Activated CD4-positive, alpha-beta memory T cell treated with anti-CD3 and anti-CD28 coated beads for 36 hours (primary cell): ENCODE measurements at regions of chr17 and their contacts with region 1.

Region 1: DNA sequence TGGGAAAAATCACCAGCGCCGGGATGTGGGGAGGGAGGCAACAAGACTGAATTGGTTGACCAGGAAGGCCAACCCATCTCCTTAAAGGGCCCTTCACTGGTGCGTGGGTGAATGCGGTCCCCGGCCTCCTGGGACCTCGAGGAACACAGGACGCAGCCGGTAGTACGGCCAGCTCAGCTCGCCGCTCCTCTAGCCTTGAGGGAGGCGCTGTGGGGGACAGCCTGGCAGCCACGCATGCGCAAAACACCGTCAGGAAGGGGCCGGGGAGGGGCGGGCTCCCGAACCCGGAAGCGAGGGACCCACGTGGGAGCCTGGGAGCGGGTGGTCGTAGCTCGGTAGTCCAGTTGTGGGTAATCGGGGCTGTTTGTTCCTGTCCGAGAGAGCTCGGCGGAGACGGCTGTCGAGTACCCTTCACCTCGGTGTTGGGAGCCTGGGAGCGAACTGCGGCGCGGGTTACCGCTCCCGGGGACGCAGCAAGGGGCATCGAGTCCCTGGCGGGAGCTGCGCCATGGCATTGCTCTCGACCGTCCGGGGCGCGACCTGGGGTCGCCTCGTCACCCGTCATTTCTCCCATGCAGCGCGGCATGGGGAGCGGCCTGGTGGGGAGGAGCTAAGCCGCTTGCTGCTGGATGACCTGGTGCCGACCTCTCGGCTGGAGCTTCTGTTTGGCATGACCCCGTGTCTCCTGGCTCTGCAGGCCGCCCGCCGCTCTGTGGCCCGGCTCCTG is at the start of gene MRM1:
- DNase-seq: peak; percentile 93
- H3K4me3 Mint-ChIP-seq: peak within 1 kb of the TSS; percentile 85
- H3K27ac Mint-ChIP-seq: peak within 1 kb of the TSS; percentile 79
- H3K4me1 Mint-ChIP-seq: peaks cover 35% of the 10 kb centered on the region
- H3K27me3 Mint-ChIP-seq: no peaks in the 10 kb centered on the region
- total RNA-seq, gene MRM1: 13.5 to 14.6 TPM

Region 2: GRCh38 chr17:36545465-36546417 is 55.7 kb before region 1 on chr17:
- CTCF ChIA-PET with region 1: interaction called, 6 read pairs
- POLR2A ChIA-PET with region 1: interaction called, 8 read pairs
- intact Hi-C with region 1: loop called (anchors 2 kb)
- DNase-seq: peak; percentile 98
- H3K4me3 Mint-ChIP-seq: peak overlapping the region; percentile 90
- H3K27ac Mint-ChIP-seq: peak overlapping the region; percentile 98
- H3K4me1 Mint-ChIP-seq: peaks cover 40% of the 10 kb centered on the region
- H3K27me3 Mint-ChIP-seq: no peaks in the 10 kb centered on the region

Region 3: DNA sequence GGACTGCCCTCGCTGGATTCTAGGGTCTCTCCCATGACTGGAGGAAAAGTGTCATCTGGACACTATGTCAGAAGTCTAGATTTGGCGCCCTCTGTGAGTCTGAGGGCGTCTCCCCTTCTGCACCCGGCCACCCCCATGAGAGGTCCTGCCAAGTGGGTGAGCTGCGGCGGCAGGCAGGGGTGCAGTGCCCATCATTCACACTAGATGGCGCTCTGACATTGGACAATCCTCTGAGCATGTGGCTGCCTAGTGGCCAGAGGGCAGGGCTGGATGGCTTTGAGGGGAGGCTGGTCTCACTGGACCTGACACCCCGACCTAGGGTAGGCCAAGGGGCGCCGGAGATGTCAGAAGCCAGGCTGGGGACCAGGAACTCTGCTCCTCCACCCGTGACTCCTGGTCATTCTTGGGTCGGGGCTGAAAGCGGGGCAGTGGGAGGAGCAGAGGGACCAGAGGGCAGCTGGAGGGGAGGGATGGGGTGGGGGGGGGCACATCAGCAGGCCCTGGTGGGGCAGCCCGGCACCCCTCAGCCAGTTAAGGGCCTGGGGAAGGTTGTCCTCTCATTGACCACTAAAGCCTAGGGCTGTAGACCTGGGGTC is 27.9 kb after region 1 on chr17:
- CTCF ChIA-PET with region 1: interaction called, 29 read pairs
- POLR2A ChIA-PET with region 1: no interaction called
- intact Hi-C with region 1: no loop called
- DNase-seq: peak; percentile 86
- H3K4me3 Mint-ChIP-seq: no peak overlapping the region
- H3K27ac Mint-ChIP-seq: no peak overlapping the region
- H3K4me1 Mint-ChIP-seq: no peaks in the 10 kb centered on the region
- H3K27me3 Mint-ChIP-seq: peaks cover 6% of the 10 kb centered on the region

Region 4: DNA sequence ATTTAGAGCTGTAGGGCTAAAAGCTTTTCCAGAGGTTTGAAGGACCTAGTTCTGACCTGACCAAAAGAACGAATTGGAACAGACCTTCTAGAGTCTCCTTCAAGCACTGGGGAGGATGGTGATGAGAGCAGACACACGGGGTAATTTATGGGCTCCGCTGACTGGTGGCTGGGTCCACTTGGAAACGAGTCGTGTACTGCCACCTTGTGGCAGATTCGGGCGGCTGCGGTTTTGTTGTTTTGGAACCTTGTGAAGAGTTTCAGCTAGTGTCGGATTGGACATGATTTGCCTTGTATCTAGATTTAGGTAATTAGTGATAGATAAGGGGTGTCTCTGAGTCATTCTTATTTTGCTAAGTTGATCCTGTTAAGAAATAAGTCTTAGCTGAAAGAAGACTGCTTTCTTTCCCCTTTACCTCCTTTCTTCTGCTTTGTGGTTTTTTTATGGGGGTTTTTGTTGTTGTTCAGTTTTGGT is 446.2 kb after region 1 on chr17:
- CTCF ChIA-PET with region 1: interaction called, 27 read pairs
- POLR2A ChIA-PET with region 1: no interaction called
- intact Hi-C with region 1: no loop called
- DNase-seq: peak; percentile 89
- H3K4me3 Mint-ChIP-seq: no peak overlapping the region
- H3K27ac Mint-ChIP-seq: peak overlapping the region; percentile 54
- H3K4me1 Mint-ChIP-seq: peaks cover 10% of the 10 kb centered on the region
- H3K27me3 Mint-ChIP-seq: no peaks in the 10 kb centered on the region